ENCODE measurements at regions of chr3 and their contacts with region 1.

Region 1: DNA sequence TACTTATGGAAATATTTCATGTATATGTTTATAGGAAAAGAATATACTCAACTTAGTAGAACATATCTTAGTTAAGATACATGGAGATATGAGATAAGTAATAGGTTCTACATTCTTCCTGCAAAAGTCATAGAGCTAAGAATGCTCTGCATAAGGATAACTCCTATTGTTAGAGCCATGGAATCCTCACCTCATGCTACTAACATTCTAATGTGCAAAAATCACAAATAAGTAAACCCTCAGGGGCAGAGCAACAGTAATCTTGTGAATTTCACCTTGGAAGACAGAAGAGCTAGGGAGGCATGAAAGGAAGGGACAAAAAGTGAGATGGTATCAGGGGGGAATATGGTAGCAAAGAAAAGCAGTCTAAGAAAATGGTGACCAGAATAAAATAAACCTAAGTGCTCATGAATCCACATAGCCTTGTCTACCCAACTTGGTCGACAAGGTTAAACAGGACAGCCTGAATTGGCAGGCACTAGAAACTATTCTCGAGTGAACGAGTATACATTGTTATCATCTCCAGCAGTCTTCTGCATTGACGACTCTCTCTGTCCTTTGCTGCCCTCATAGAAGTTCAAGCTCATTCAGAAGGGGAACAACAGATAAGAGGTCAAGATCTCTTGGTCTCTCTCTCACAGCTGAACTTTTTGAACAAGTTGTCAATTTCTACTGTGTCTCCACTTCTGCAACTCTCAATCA is 52.8 kb downstream of the XRN1 start:
- DNase-seq: no peak
- ATAC-seq: peak in 5 of 8 donors; percentile 49 to 74 (median 67)
- H3K4me3 ChIP-seq: no peak overlapping the region
- H3K27ac ChIP-seq: no peak overlapping the region
- H3K4me1 ChIP-seq: no peaks in the 10 kb centered on the region
- H3K27me3 ChIP-seq: no peaks in the 10 kb centered on the region
- CTCF ChIP-seq: no peak

Region 2: DNA sequence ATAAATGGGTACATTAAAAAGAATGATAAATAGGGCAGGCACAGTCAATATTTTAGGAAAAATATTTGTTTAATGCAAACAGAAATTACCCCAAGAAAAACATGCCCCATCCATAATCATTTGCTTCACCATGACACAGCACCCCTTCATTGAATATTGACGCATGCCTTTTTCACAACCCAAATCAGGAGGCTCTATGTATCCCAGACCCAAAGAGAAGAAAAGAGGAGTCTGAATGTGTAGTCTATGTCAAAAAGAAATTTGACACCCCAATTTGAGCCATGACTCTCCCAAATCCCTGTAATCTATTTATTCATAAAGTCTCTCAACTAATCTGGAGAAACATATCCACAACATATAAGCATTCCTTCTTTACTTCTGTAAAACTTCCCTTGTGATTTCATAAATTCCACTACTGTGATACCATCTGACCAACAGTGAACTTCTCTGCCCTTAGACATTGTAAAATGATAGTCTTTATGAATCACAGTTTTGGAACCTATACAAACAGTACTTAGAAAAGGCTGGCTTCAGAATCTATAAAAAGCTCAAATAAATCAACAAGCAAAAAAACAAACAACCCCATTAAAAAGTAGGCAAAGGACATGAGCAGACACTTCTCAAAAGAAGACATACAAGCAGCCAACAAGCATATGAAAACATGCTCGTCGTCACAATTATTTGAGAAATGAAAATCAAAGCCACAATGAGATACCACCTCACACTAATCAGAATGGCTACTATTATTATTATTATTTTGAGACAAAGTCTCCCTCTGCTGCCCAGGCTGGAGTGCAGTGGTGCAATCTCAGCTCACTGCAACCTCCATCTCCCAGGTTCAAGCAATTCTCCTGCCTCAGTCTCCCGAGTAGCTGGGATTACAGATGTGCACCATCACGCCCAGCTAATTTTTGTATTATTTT is 106.2 kb after region 1 on chr3:
- intact Hi-C with region 1: loop called in 1 of 10 experiments (anchors 10 kb)
- DNase-seq: no peak
- ATAC-seq: no peak
- H3K4me3 ChIP-seq: no peak overlapping the region
- H3K27ac ChIP-seq: no peak overlapping the region
- H3K4me1 ChIP-seq: no peaks in the 10 kb centered on the region
- H3K27me3 ChIP-seq: no peaks in the 10 kb centered on the region
- CTCF ChIP-seq: no peak

Region 3: DNA sequence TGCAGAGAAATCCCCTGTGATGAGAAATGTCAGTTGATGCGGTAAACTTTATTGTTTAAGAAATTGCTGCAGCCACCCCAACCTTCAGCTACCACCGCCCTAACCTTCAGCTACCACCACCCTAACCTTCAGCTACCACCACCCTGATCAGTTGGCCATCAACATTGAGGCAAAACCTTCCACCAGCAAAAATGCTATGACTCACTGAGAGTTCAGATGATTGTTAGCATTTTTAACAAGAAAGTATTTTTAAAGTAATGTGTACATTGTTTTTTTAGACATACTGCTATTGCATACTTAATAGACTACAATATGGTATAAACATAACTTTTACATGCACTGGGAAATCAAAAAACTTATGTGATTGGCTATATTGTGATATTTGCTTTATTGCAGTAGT is 636.3 kb after region 1 on chr3:
- intact Hi-C with region 1: loop called in 1 of 10 experiments (anchors 5 kb)
- DNase-seq: no peak
- ATAC-seq: no peak
- H3K4me3 ChIP-seq: no peak overlapping the region
- H3K27ac ChIP-seq: no peak overlapping the region
- H3K4me1 ChIP-seq: peaks cover 0 to 12% (median 0%) of the 10 kb centered on the region in 9 donors
- H3K27me3 ChIP-seq: no peaks in the 10 kb centered on the region
- CTCF ChIP-seq: no peak